ENCODE measurements at regions of chr4 and their contacts with region 1.

Region 1: GRCh38 chr4:102263011-102263787 is 82.1 kb downstream of the SLC39A8 start:
- DNase-seq: peak; percentile 61
- ATAC-seq: peak; percentile 74
- H3K4me3 ChIP-seq: no peak overlapping the region
- H3K4me3 Mint-ChIP-seq: no peak overlapping the region
- H3K27ac ChIP-seq: no peak overlapping the region
- H3K27ac Mint-ChIP-seq: no peak overlapping the region
- H3K4me1 ChIP-seq: no peaks in the 10 kb centered on the region
- H3K4me1 Mint-ChIP-seq: no peaks in the 10 kb centered on the region
- H3K27me3 ChIP-seq: no peaks in the 10 kb centered on the region
- H3K27me3 Mint-ChIP-seq: no peaks in the 10 kb centered on the region
- CTCF ChIP-seq: peak; percentile 79

Region 2: GRCh38 chr4:100421361-100421978 is 1841.7 kb before region 1 on chr4:
- CTCF ChIA-PET with region 1: no interaction called
- POLR2A ChIA-PET with region 1: no interaction called
- intact Hi-C with region 1: loop called (anchors 5 kb)
- DNase-seq: peak; percentile 3
- ATAC-seq: no peak
- H3K4me3 ChIP-seq: no peak overlapping the region
- H3K4me3 Mint-ChIP-seq: no peak overlapping the region
- H3K27ac ChIP-seq: no peak overlapping the region
- H3K27ac Mint-ChIP-seq: no peak overlapping the region
- H3K4me1 ChIP-seq: no peaks in the 10 kb centered on the region
- H3K4me1 Mint-ChIP-seq: no peaks in the 10 kb centered on the region
- H3K27me3 ChIP-seq: no peaks in the 10 kb centered on the region
- H3K27me3 Mint-ChIP-seq: peaks cover 7% of the 10 kb centered on the region
- CTCF ChIP-seq: peak; percentile 39

Region 3: GRCh38 chr4:100907465-100908454 is 1355.4 kb before region 1 on chr4:
- CTCF ChIA-PET with region 1: interaction called, 4 read pairs
- POLR2A ChIA-PET with region 1: no interaction called
- intact Hi-C with region 1: loop called (anchors 10 kb)
- DNase-seq: no peak
- ATAC-seq: no peak
- H3K4me3 ChIP-seq: no peak overlapping the region
- H3K4me3 Mint-ChIP-seq: no peak overlapping the region
- H3K27ac ChIP-seq: no peak overlapping the region
- H3K27ac Mint-ChIP-seq: no peak overlapping the region
- H3K4me1 ChIP-seq: no peaks in the 10 kb centered on the region
- H3K4me1 Mint-ChIP-seq: no peaks in the 10 kb centered on the region
- H3K27me3 ChIP-seq: no peaks in the 10 kb centered on the region
- H3K27me3 Mint-ChIP-seq: no peaks in the 10 kb centered on the region
- CTCF ChIP-seq: peak; percentile 37

Region 4: GRCh38 chr4:101169044-101170014 is 1093.9 kb before region 1 on chr4:
- CTCF ChIA-PET with region 1: interaction called, 16 read pairs
- POLR2A ChIA-PET with region 1: no interaction called
- intact Hi-C with region 1: loop called (anchors 1 kb)
- DNase-seq: peak; percentile 76
- ATAC-seq: peak; percentile 96
- H3K4me3 ChIP-seq: no peak overlapping the region
- H3K4me3 Mint-ChIP-seq: no peak overlapping the region
- H3K27ac ChIP-seq: no peak overlapping the region
- H3K27ac Mint-ChIP-seq: no peak overlapping the region
- H3K4me1 ChIP-seq: peaks cover 7 to 18% of the 10 kb centered on the region in 2 donors
- H3K4me1 Mint-ChIP-seq: peaks cover 27% of the 10 kb centered on the region
- H3K27me3 ChIP-seq: no peaks in the 10 kb centered on the region
- H3K27me3 Mint-ChIP-seq: no peaks in the 10 kb centered on the region
- CTCF ChIP-seq: peak; percentile 77

Region 5: GRCh38 chr4:104138116-104138515 is 1874.9 kb after region 1 on chr4:
- CTCF ChIA-PET with region 1: no interaction called
- POLR2A ChIA-PET with region 1: no interaction called
- intact Hi-C with region 1: no loop called
- DNase-seq: no peak
- ATAC-seq: no peak
- H3K4me3 ChIP-seq: no peak overlapping the region
- H3K4me3 Mint-ChIP-seq: no peak overlapping the region
- H3K27ac ChIP-seq: no peak overlapping the region
- H3K27ac Mint-ChIP-seq: no peak overlapping the region
- H3K4me1 ChIP-seq: no peaks in the 10 kb centered on the region
- H3K4me1 Mint-ChIP-seq: no peaks in the 10 kb centered on the region
- H3K27me3 ChIP-seq: no peaks in the 10 kb centered on the region
- H3K27me3 Mint-ChIP-seq: no peaks in the 10 kb centered on the region
- CTCF ChIP-seq: no peak

Measured in B cell (primary cell).